Sigmoid colon (tissue), 7 donors: ENCODE measurements at regions of chr5 and their contacts with region 1.

Region 1: GRCh38 chr5:177554474-177555111 is at the start of gene FAM193B:
- DNase-seq: peak; percentile 97
- H3K4me3 ChIP-seq: peak within 1 kb of the TSS; percentile 78 to 98 (median 96)
- H3K27ac ChIP-seq: peak within 1 kb of the TSS; percentile 82 to 91 (median 89)
- H3K4me1 ChIP-seq: peaks cover 0 to 44% (median 20%) of the 10 kb centered on the region in 4 donors
- H3K27me3 ChIP-seq: no peaks in the 10 kb centered on the region
- CTCF ChIP-seq: peak in 1 of 4 experiments; percentile 13
- EP300 ChIP-seq: peak in 1 of 4 donors; percentile 4
- POLR2A ChIP-seq: no peak
- total RNA-seq, gene FAM193B: 39.6 to 82.8 (median 43.9) TPM

Region 2: GRCh38 chr5:176596689-176597416 is 957.7 kb before region 1 on chr5:
- intact Hi-C with region 1: no loop called
- DNase-seq: no peak
- H3K4me3 ChIP-seq: peak overlapping the region in 3 of 4 donors; percentile 30 to 48 (median 46)
- H3K27ac ChIP-seq: no peak overlapping the region
- H3K4me1 ChIP-seq: peaks cover 0 to 13% (median 9%) of the 10 kb centered on the region in 4 donors
- H3K27me3 ChIP-seq: peaks cover 5 to 37% (median 8%) of the 10 kb centered on the region in 3 donors
- CTCF ChIP-seq: peak in 1 of 4 experiments; percentile 9
- EP300 ChIP-seq: no peak
- POLR2A ChIP-seq: no peak

Region 3: DNA sequence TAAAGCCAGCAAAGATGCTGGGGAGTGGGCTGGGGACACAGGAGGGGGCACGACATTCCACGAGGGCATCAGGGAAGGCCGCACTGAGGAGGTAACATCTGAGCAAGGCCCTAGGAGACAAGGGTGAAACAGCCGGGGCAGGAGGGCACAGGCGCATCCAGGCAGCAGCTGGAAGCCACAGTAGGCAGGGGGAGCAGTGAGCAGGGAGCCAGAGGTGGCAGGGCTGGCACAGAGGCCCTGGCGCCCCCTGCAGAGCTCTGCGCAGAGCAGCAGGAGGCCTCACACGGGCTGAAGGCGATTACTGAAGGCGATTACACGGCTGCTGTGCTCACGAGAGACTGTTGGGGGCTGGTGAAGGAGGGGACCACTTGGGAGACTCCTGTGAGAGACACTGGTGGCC is 218.5 kb before region 1 on chr5:
- intact Hi-C with region 1: no loop called
- DNase-seq: no peak
- H3K4me3 ChIP-seq: no peak overlapping the region
- H3K27ac ChIP-seq: no peak overlapping the region
- H3K4me1 ChIP-seq: no peaks in the 10 kb centered on the region
- H3K27me3 ChIP-seq: no peaks in the 10 kb centered on the region
- CTCF ChIP-seq: no peak
- EP300 ChIP-seq: no peak
- POLR2A ChIP-seq: no peak

Region 4: GRCh38 chr5:177592010-177592834 is 37.6 kb after region 1 on chr5 and contains the start of gene TMED9:
- intact Hi-C with region 1: loop called (anchors 2 kb)
- DNase-seq: peak; percentile 88
- H3K4me3 ChIP-seq: peak within 1 kb of the TSS; percentile 64 to 97 (median 91)
- H3K27ac ChIP-seq: peak within 1 kb of the TSS; percentile 72 to 82 (median 78)
- H3K4me1 ChIP-seq: peaks cover 0 to 20% (median 17%) of the 10 kb centered on the region in 4 donors
- H3K27me3 ChIP-seq: peaks cover 0 to 27% (median 0%) of the 10 kb centered on the region in 3 donors
- CTCF ChIP-seq: no peak
- EP300 ChIP-seq: no peak
- POLR2A ChIP-seq: peak; percentile 67 to 70
- total RNA-seq, gene TMED9: 48.9 to 64.5 (median 55.6) TPM

Region 5: GRCh38 chr5:177599731-177600507 is 45.3 kb after region 1 on chr5 and contains the start of gene B4GALT7:
- intact Hi-C with region 1: loop called (anchors 2 kb)
- DNase-seq: peak; percentile 91
- H3K4me3 ChIP-seq: peak within 1 kb of the TSS; percentile 74 to 92 (median 82)
- H3K27ac ChIP-seq: peak within 1 kb of the TSS; percentile 88 to 90 (median 88)
- H3K4me1 ChIP-seq: peaks cover 0 to 21% (median 13%) of the 10 kb centered on the region in 4 donors
- H3K27me3 ChIP-seq: no peaks in the 10 kb centered on the region
- CTCF ChIP-seq: no peak
- EP300 ChIP-seq: no peak
- POLR2A ChIP-seq: peak; percentile 12 to 39
- total RNA-seq, gene B4GALT7: 13.3 to 18.5 (median 15.6) TPM

Region 6: DNA sequence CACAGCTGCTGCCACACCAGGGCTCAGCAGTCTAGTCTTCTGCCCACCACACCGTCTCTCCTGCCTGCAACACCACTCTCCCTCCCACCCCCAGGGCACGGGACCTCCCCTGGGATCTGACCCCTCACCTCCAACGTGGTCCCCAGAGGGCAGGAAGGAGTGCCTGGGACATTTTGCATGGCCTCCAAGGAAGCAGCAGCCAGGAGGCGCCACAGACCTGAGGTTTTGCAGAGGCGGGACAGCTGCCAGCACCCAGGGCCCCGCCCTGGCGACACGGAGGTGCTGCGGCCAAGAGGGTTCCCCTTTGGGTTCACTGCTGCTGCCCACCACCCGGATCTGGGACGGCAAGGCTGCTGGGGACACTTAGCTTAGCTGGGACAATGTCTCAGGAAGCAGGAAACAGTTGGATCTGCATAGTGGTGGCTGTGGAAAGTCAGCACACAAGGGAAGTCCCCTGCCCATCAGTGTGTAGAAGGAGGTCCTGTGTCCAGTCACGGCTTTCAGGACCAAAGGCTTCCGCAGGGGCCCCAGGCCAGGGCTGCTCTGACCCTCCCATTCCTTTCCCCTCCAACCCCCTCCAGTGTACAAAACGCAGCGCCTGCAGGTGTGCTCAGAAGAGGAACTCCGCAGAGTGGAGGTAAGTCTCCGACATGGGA is 427.6 kb after region 1 on chr5:
- intact Hi-C with region 1: no loop called
- DNase-seq: no peak
- H3K4me3 ChIP-seq: no peak overlapping the region
- H3K27ac ChIP-seq: no peak overlapping the region
- H3K4me1 ChIP-seq: no peaks in the 10 kb centered on the region
- H3K27me3 ChIP-seq: peaks cover 18 to 68% (median 45%) of the 10 kb centered on the region in 3 donors
- CTCF ChIP-seq: no peak
- EP300 ChIP-seq: no peak
- POLR2A ChIP-seq: no peak